Right ventricle myocardium superior (tissue), 1 donor: ENCODE measurements at regions of chr9 and their contacts with region 1.

Region 1: DNA sequence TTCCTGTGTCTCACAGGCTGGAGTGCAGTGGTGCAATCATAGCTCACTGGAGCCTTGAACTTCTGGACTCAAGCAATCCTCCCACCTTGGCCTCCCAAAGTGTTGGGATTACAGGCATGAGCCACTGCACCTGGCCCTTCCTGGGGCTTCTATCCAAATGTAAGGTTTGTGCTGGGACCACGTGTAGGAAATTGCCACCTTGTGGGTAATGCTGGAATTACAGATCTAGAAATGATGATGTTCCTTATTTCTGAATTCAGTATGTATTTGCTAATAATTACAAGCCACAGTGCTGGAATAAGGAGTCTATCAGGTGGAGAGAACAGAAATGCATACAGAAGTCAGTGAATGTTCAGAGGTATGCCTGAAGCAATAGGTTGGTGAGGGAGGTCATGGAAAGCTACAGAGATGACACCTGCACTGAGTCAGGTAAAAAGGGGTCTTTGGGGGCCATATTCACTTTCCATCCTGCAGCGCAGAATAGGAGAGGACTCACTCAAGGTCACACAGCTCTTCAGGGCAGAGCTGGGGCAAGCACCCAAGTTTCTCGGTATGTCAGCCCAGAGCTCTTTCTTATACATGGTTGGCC is 8.8 kb upstream of the IGFBPL1 start:
- DNase-seq: no peak
- ATAC-seq: peak; percentile 34

Region 2: GRCh38 chr9:37187713-37188439 is 1245.1 kb before region 1 on chr9:
- intact Hi-C with region 1: no loop called
- DNase-seq: no peak
- ATAC-seq: no peak

Region 3: DNA sequence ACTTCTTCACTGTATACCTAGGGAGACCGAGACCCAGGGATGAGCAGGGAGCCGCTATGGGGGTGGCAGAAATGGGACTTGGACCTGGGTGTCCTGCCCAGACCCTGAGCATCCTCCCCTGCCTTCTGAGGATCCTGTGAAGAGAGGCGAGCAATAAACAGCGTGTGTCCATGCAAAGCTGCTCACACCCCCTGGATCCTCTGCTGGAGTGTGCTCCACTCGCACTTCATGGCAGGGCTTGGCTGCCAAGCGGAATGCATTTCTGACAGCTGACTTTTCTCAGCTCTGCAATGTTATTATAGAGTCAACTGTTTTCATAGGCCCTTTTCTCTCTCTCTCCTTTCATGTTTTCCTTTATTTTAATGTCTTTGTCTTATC is 71.6 kb before region 1 on chr9:
- intact Hi-C with region 1: no loop called
- DNase-seq: no peak
- ATAC-seq: no peak

Region 4: DNA sequence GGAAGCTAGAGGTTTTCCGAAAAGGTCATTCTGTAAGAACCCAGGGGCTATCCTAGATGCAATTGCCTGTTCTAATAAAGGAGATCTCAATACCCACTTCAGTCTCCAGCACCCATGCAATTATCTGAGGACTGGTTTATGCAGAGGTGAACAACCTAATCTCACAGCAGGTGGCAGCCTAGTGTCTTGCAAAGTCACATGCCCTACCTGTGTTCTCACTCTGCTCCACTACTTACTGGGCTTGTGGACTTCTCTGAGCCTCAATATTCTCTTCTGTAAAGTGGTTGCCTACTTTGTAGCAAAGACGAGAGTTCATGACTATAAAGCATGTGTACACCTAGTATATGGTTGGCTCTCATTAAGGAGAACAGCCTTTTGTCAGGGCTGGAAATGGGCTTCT is 61.5 kb before region 1 on chr9:
- intact Hi-C with region 1: loop called (anchors 10 kb)
- DNase-seq: no peak
- ATAC-seq: peak; percentile 52

Region 5: GRCh38 chr9:38408719-38409118 is 24.3 kb before region 1 on chr9:
- intact Hi-C with region 1: no loop called
- DNase-seq: no peak
- ATAC-seq: no peak